GM10248 (cell line): ENCODE measurements at regions of chr7 and their contacts with region 1.

Region 1: GRCh38 chr7:87152107-87152844 is at the start of gene DMTF1:
- DNase-seq: peak; percentile 93
- CTCF ChIP-seq: no peak

Region 2: GRCh38 chr7:86914551-86914950 is 237.7 kb before region 1 on chr7:
- CTCF ChIA-PET with region 1: interaction called, 36 read pairs
- POLR2A ChIA-PET with region 1: interaction called, 3 read pairs
- DNase-seq: no peak
- CTCF ChIP-seq: peak; percentile 38

Region 3: GRCh38 chr7:86939197-86939814 is 213.0 kb before region 1 on chr7:
- CTCF ChIA-PET with region 1: interaction called, 130 read pairs
- POLR2A ChIA-PET with region 1: no interaction called
- DNase-seq: no peak
- CTCF ChIP-seq: peak; percentile 64

Region 4: DNA sequence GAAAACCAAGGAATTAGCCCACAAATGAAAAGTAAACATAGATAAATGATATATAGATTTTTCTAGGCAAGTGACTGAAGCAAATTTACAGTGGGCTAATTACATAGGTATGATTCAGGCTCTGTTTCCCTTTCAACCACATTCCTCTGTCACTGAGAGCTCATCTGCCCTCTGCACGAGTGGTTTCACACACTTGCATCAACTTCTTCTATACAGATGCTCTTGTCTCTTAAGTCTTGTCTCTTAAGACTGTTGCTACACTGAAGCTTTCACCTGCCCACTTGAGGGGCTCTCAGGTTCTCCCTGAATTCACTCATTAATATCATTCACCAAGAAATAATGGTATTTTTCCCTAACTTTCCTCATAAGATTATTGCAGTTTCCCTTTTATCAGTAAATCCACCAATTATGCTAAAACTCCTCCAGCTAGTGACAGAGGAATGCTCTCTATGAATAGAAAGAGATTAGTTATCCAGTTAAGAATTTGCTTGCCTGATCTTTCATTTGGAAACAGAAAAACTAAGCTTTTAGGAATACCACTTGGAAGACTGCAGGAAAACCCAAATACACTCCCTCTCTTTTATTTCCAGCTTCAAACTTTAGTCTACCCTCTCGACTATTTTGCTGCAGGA is 188.6 kb before region 1 on chr7:
- CTCF ChIA-PET with region 1: interaction called, 10 read pairs
- POLR2A ChIA-PET with region 1: no interaction called
- DNase-seq: no peak
- CTCF ChIP-seq: no peak

Region 5: GRCh38 chr7:87129848-87130247 is 22.4 kb before region 1 on chr7:
- CTCF ChIA-PET with region 1: interaction called, 52 read pairs
- POLR2A ChIA-PET with region 1: interaction called, 3 read pairs
- DNase-seq: peak; percentile 18
- CTCF ChIP-seq: no peak

Region 6: GRCh38 chr7:87220026-87220733 is 67.9 kb after region 1 on chr7:
- CTCF ChIA-PET with region 1: interaction called, 6 read pairs
- POLR2A ChIA-PET with region 1: interaction called, 15 read pairs
- DNase-seq: peak; percentile 84
- CTCF ChIP-seq: no peak